Aorta (tissue), 5 donors: ENCODE measurements at regions of chr1 and their contacts with region 1.

Region 1: GRCh38 chr1:91924146-91924545 is 25.1 kb upstream of the BRDT start:
- DNase-seq: no peak
- ATAC-seq: no peak
- H3K4me3 ChIP-seq: no peak overlapping the region
- H3K27ac ChIP-seq: no peak overlapping the region
- H3K4me1 ChIP-seq: no peaks in the 10 kb centered on the region
- H3K27me3 ChIP-seq: no peaks in the 10 kb centered on the region

Region 2: GRCh38 chr1:91511386-91511785 is 412.8 kb before region 1 on chr1:
- intact Hi-C with region 1: loop called (anchors 2 to 5 kb)
- DNase-seq: no peak
- ATAC-seq: no peak
- H3K4me3 ChIP-seq: no peak overlapping the region
- H3K27ac ChIP-seq: no peak overlapping the region
- H3K4me1 ChIP-seq: no peaks in the 10 kb centered on the region
- H3K27me3 ChIP-seq: no peaks in the 10 kb centered on the region

Region 3: GRCh38 chr1:91529856-91530255 is 394.3 kb before region 1 on chr1:
- intact Hi-C with region 1: loop called (anchors 5 kb)
- DNase-seq: no peak
- ATAC-seq: no peak
- H3K4me3 ChIP-seq: no peak overlapping the region
- H3K27ac ChIP-seq: no peak overlapping the region
- H3K4me1 ChIP-seq: no peaks in the 10 kb centered on the region
- H3K27me3 ChIP-seq: no peaks in the 10 kb centered on the region

Region 4: GRCh38 chr1:92004129-92004528 is 80.0 kb after region 1 on chr1:
- intact Hi-C with region 1: no loop called
- DNase-seq: no peak
- ATAC-seq: no peak
- H3K4me3 ChIP-seq: no peak overlapping the region
- H3K27ac ChIP-seq: no peak overlapping the region
- H3K4me1 ChIP-seq: no peaks in the 10 kb centered on the region
- H3K27me3 ChIP-seq: no peaks in the 10 kb centered on the region

Region 5: GRCh38 chr1:92037400-92037799 is 113.3 kb after region 1 on chr1:
- intact Hi-C with region 1: no loop called
- DNase-seq: no peak
- ATAC-seq: no peak
- H3K4me3 ChIP-seq: no peak overlapping the region
- H3K27ac ChIP-seq: no peak overlapping the region
- H3K4me1 ChIP-seq: no peaks in the 10 kb centered on the region
- H3K27me3 ChIP-seq: no peaks in the 10 kb centered on the region

Region 6: DNA sequence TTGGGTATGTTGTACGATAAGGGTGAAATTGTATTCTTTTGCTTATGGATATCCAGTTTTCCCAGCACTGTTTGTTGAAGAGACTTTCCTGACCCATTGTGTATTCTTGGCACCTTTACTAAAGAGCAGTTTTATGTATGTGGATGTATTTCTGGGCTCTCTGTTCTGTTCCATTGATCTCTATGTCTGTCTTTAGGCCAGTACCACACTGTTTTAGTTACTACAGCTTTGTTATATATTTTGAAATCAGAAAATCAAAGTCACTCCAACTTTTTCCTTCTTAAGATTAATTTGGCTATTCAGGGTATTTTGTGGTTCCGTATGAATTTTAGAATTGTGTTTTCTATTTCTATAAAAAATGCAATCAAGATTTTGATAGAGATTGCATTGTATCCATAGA is 230.8 kb after region 1 on chr1:
- intact Hi-C with region 1: no loop called
- DNase-seq: no peak
- ATAC-seq: no peak
- H3K4me3 ChIP-seq: no peak overlapping the region
- H3K27ac ChIP-seq: no peak overlapping the region
- H3K4me1 ChIP-seq: no peaks in the 10 kb centered on the region
- H3K27me3 ChIP-seq: no peaks in the 10 kb centered on the region